Activated CD4-positive, alpha-beta memory T cell treated with anti-CD3 and anti-CD28 coated beads, Interleukin-2, amount 10 ng/mL, durations not matched to agents 7 days and 5 days (primary cell): ENCODE measurements at regions of chr11 and their contacts with region 1.

Region 1: GRCh38 chr11:75428281-75428724 is 4.7 kb downstream of the KLHL35 start:
- DNase-seq: peak; percentile 72
- H3K4me3 Mint-ChIP-seq: peak overlapping the region; percentile 51
- H3K27ac Mint-ChIP-seq: no peak overlapping the region
- H3K4me1 Mint-ChIP-seq: peaks cover 30% of the 10 kb centered on the region
- H3K27me3 Mint-ChIP-seq: peaks cover 49% of the 10 kb centered on the region

Region 2: GRCh38 chr11:75413864-75414263 is 14.4 kb before region 1 on chr11:
- CTCF ChIA-PET with region 1: interaction called, 3 read pairs
- POLR2A ChIA-PET with region 1: interaction called, 11 read pairs
- DNase-seq: no peak
- H3K4me3 Mint-ChIP-seq: no peak overlapping the region
- H3K27ac Mint-ChIP-seq: no peak overlapping the region
- H3K4me1 Mint-ChIP-seq: no peaks in the 10 kb centered on the region
- H3K27me3 Mint-ChIP-seq: no peaks in the 10 kb centered on the region

Region 3: DNA sequence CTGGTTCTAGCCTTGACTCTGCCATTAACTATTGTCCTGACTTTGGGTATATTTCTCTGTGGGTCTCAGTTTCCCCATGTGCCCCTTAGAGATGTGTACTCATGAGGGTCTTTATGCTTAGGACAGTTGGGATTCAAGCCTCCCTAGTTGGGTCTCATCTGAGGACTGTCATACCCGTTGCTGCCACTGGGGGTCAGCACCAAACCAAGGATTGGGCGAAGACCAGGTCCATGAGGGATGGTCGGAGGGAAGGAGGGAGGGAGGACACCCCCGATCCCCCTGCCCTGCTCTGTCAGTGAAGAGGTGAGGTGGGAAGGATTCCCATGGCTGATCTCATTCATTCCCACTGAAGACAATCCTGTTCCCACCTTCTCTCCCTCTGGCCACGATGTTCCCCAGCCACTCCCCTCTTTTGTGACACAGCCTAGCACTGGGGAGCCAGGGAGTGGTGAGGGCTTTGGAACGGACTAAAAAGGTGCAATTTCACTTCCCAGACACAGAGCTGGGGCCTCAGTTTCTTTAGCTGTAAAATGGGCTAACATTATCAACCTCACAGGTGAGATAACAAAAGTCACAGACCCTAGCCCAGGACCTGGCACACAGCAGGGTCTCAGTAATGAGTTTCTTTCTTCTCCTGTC is 17.1 kb after region 1 on chr11:
- CTCF ChIA-PET with region 1: interaction called, 16 read pairs
- POLR2A ChIA-PET with region 1: interaction called, 4 read pairs
- DNase-seq: peak; percentile 73
- H3K4me3 Mint-ChIP-seq: no peak overlapping the region
- H3K27ac Mint-ChIP-seq: no peak overlapping the region
- H3K4me1 Mint-ChIP-seq: peaks cover 5% of the 10 kb centered on the region
- H3K27me3 Mint-ChIP-seq: no peaks in the 10 kb centered on the region

Region 4: GRCh38 chr11:75474878-75475766 is 46.8 kb after region 1 on chr11:
- CTCF ChIA-PET with region 1: no interaction called
- POLR2A ChIA-PET with region 1: no interaction called
- DNase-seq: peak; percentile 84
- H3K4me3 Mint-ChIP-seq: peak overlapping the region; percentile 11
- H3K27ac Mint-ChIP-seq: peak overlapping the region; percentile 75
- H3K4me1 Mint-ChIP-seq: peaks cover 23% of the 10 kb centered on the region
- H3K27me3 Mint-ChIP-seq: no peaks in the 10 kb centered on the region

Region 5: DNA sequence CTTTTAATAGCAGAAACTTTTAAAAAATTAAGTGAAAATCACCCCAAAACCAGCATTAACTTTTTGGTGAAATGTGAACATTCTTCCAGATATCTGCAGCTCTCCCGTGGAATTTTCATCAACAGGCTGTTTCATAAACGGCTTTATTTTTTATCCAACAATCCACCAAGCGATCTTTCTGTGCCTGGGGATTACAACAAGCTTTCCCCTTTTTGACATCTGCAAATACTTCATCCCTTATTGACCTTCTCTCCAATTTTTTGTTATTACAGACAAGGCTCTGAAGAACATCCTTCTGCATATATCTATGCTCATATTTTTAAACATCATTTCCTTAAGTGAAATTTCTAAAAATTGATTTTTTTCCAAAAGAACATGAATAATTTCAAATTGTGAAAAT is 128.0 kb after region 1 on chr11:
- CTCF ChIA-PET with region 1: no interaction called
- POLR2A ChIA-PET with region 1: no interaction called
- DNase-seq: no peak
- H3K4me3 Mint-ChIP-seq: no peak overlapping the region
- H3K27ac Mint-ChIP-seq: no peak overlapping the region
- H3K4me1 Mint-ChIP-seq: peaks cover 7% of the 10 kb centered on the region
- H3K27me3 Mint-ChIP-seq: peaks cover 6% of the 10 kb centered on the region